Activated T-helper 2 cell treated with anti-CD3 and anti-CD28 coated beads, Interferon-gamma antibody, Interleukin-2, Interleukin-4, amounts not matched to agents 10 μg/mL and 5 μg/mL and 100 μg/mL, durations not matched to agents 14 hours and 24 hours and 36 hours (primary cell): ENCODE measurements at regions of chr6 and their contacts with region 1.

Region 1: DNA sequence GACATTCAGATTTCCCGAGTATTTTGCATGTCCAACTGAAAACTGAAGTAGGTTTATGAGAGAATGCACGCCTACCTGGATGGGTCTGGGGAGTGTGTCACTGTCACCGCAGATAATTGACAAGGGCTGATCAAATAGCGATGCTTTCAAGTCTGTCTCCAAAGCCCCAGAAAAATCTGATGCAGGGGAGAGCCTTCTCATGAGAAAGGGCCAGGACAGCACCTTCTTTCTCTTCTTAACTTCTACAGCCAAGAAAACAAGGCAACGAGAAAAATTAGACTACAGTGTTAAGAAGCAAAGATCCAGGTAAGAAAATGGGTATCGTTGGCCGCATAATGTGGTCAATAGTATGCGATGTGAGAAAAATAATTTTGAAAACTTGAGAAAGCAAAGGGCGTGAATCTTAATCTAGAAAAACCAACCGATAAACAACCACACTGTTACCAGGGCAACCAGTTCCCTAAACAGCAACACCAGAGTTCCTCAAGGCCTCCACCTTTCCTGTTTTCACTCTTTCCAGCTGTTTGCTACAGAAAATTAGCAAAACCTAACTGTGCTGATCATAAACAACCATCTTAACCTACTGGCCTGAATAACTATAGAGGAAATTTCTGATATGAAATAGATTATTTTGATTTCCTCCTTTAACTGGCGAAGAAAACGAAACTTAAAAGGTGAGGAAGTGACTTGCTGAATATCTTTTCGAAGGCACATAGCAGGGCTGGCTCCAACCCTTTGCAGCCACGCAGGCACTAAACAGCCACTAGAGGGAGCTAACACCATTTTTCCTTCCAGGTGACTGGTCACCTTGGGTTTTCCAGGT is 2.6 kb downstream of the TAGAP start:
- DNase-seq: peak; percentile 76
- H3K4me3 Mint-ChIP-seq: peak overlapping the region; percentile 96
- H3K27ac Mint-ChIP-seq: peak overlapping the region; percentile 98
- H3K4me1 Mint-ChIP-seq: peaks cover 54% of the 10 kb centered on the region
- H3K27me3 Mint-ChIP-seq: no peaks in the 10 kb centered on the region

Region 2: GRCh38 chr6:158819213-158819909 is 222.9 kb before region 1 on chr6 and contains the start of gene EZR:
- intact Hi-C with region 1: loop called (anchors 5 kb)
- DNase-seq: peak; percentile 71
- H3K4me3 Mint-ChIP-seq: peak within 1 kb of the TSS; percentile 99
- H3K27ac Mint-ChIP-seq: peak within 1 kb of the TSS; percentile 89
- H3K4me1 Mint-ChIP-seq: peaks cover 42% of the 10 kb centered on the region
- H3K27me3 Mint-ChIP-seq: no peaks in the 10 kb centered on the region
- total RNA-seq, gene EZR: 204 and 206 TPM in 2 replicates

Region 3: DNA sequence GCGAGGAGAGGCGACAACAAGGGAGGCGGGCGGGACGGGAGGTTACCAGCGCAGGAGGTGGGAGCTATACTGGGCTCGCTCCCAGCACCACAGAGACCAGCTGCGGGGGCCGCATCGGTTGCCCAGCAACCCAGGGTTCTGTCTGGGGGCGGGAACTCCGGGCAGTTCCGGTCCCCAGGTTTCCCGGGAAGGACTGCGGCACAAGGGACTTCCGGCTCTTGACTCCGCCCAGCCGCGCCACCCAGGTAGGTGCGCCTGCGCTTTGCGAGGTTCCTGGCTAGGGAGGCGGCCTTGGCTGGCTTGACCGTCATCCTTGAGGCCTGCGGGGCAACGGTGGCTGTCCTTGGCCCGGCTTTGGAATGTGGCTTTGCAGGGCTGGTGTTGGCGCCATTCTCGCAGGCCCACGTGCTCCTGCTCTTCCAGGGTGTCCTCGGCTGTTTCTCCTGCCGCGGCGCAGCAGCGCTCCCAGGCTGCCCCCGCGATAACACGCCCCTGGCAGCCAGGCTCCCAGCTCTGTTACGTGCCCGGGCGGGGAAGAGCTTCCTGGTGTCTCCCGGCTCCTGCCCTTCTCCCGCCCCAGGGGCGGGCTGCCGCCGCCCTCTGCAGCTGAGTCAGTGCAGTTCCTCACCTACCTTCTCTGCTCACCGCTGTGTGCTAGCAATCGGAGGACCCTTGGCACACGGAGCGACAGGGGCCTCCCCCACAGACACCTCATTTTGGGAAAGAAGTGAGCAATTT is 42.4 kb before region 1 on chr6 and contains the start of gene RSPH3:
- intact Hi-C with region 1: loop called (anchors 1 kb)
- DNase-seq: peak; percentile 87
- H3K4me3 Mint-ChIP-seq: peak within 1 kb of the TSS; percentile 96
- H3K27ac Mint-ChIP-seq: peak within 1 kb of the TSS; percentile 89
- H3K4me1 Mint-ChIP-seq: peaks cover 49% of the 10 kb centered on the region
- H3K27me3 Mint-ChIP-seq: no peaks in the 10 kb centered on the region
- total RNA-seq, gene RSPH3: 4.9 and 5.1 TPM in 2 replicates

Region 4: GRCh38 chr6:159062564-159062945 is 20.3 kb after region 1 on chr6:
- intact Hi-C with region 1: loop called (anchors 1 kb)
- DNase-seq: peak; percentile 61
- H3K4me3 Mint-ChIP-seq: peak overlapping the region; percentile 65
- H3K27ac Mint-ChIP-seq: peak overlapping the region; percentile 94
- H3K4me1 Mint-ChIP-seq: peaks cover 81% of the 10 kb centered on the region
- H3K27me3 Mint-ChIP-seq: peaks cover 1% of the 10 kb centered on the region

Region 5: DNA sequence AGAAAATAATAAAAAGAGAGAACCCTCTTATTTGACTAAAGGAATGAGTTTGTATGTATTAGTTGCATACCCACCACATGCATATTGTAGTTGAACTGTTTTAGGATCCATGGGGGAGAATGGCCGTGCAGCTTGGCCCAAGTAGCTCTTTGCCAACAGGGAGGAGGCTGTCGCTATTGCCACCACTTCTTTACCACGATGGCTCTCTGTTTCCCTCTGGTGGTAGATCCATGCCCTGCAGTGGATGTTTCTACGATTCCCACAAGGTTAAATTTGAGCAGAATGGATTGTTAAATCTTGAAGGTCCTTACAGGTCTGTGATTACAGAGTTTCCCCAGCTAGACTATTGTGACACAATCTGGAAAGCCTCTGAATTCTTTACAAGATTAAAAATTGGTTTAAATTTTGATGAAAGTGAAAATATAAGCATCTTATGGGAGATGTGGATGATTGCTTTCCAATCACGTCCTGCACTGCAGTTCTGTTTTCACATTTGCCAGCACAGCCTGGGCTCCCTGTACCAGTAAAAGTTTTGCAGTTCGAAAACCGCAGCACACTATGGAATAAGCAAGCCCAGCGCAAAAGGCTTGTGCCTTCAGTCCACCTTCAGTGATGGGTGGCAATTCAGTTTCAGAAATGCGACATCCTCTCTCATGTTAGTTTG is 92.6 kb after region 1 on chr6:
- intact Hi-C with region 1: loop called (anchors 1 kb)
- DNase-seq: peak; percentile 64
- H3K4me3 Mint-ChIP-seq: no peak overlapping the region
- H3K27ac Mint-ChIP-seq: no peak overlapping the region
- H3K4me1 Mint-ChIP-seq: peaks cover 4% of the 10 kb centered on the region
- H3K27me3 Mint-ChIP-seq: peaks cover 23% of the 10 kb centered on the region